ENCODE measurements at regions of chr9 and their contacts with region 1.

Region 1: DNA sequence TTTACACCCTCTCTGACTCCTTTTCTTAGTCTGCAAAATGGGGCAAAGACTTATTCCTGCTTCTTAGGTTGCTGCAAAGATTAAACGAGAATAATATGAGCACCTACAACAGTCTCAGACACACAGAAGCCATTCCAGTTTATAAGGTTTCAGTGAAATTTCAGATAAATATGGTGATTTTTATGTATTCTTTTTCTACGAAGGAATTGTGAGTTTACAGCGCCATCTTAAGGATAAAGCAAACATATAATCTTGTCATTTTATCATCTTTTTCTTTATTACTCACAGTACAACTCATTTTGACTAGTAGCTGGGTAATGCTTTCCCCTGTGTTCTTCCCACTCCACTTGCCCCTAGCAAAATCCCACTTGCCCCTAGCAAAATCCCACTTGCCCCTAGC is 29.2 kb upstream of the SMC5 start:
- DNase-seq: no peak
- H3K4me3 ChIP-seq: no peak overlapping the region
- H3K27ac ChIP-seq: no peak overlapping the region
- H3K4me1 ChIP-seq: no peaks in the 10 kb centered on the region
- H3K27me3 ChIP-seq: no peaks in the 10 kb centered on the region
- CTCF ChIP-seq: peak in 2 of 4 experiments; percentile 26
- POLR2A ChIP-seq: no peak

Region 2: GRCh38 chr9:69971643-69972449 is 257.7 kb before region 1 on chr9:
- intact Hi-C with region 1: loop called (anchors 10 kb)
- DNase-seq: peak; percentile 58
- H3K4me3 ChIP-seq: no peak overlapping the region
- H3K27ac ChIP-seq: no peak overlapping the region
- H3K4me1 ChIP-seq: no peaks in the 10 kb centered on the region
- H3K27me3 ChIP-seq: no peaks in the 10 kb centered on the region
- CTCF ChIP-seq: peak; percentile 65 to 79 (median 76)
- POLR2A ChIP-seq: no peak

Region 3: DNA sequence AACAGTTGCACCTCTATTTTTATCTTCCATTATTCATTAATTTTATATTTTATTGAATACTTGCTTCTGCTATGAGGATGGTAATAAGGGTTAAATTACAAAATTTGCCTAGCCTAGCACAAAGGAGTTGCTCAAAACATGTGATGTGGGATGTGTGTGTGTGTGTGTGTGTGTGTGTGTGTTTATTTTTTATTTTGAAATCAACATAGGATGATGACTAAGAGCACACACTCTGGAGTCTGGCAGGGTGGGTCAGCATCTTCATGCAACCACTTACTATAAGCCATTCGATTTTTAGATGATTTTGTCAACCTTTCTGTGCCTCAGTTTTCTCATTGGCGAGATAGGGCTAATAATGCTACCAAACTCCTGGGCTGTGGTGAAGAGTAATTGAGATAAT is 243.6 kb before region 1 on chr9:
- intact Hi-C with region 1: no loop called
- DNase-seq: no peak
- H3K4me3 ChIP-seq: no peak overlapping the region
- H3K27ac ChIP-seq: no peak overlapping the region
- H3K4me1 ChIP-seq: no peaks in the 10 kb centered on the region
- H3K27me3 ChIP-seq: no peaks in the 10 kb centered on the region
- CTCF ChIP-seq: no peak
- POLR2A ChIP-seq: no peak

Region 4: DNA sequence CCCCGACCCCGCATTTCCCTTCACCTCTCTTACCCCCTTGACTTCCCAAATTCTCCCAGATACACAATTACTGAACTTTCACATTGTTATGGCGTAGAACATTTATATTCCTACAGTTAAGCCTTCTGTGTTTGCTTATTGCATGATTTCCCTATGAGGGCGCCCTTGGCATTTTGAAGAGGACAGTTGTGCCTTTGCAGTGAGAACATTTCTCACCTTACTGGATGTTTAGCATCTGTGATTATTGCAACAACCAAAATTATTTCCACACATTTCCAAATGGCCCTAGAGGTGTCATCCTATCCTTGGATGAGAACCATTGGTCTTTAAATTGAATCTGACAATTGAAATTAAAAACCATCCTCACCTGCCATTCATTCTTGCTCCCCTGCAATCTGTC is 82.0 kb before region 1 on chr9:
- intact Hi-C with region 1: loop called (anchors 10 kb)
- DNase-seq: no peak
- H3K4me3 ChIP-seq: no peak overlapping the region
- H3K27ac ChIP-seq: no peak overlapping the region
- H3K4me1 ChIP-seq: no peaks in the 10 kb centered on the region
- H3K27me3 ChIP-seq: no peaks in the 10 kb centered on the region
- CTCF ChIP-seq: no peak
- POLR2A ChIP-seq: no peak

Measured in prostate gland (tissue), 2 donors.